Caco-2 (cell line): ENCODE measurements at regions of chrX and their contacts with region 1.

Region 1: GRCh38 chrX:8820910-8821527 is 19.8 kb upstream of the FAM9A start:
- DNase-seq: peak in 1 of 2 experiments; percentile 9
- H3K4me3 ChIP-seq: no peak overlapping the region
- H3K4me3 Mint-ChIP-seq: no peak overlapping the region
- H3K27ac Mint-ChIP-seq: no peak overlapping the region
- H3K4me1 ChIP-seq: no peaks in the 10 kb centered on the region
- H3K4me1 Mint-ChIP-seq: no peaks in the 10 kb centered on the region
- H3K27me3 ChIP-seq: no peaks in the 10 kb centered on the region
- H3K27me3 Mint-ChIP-seq: no peaks in the 10 kb centered on the region
- CTCF ChIP-seq: no peak

Region 2: DNA sequence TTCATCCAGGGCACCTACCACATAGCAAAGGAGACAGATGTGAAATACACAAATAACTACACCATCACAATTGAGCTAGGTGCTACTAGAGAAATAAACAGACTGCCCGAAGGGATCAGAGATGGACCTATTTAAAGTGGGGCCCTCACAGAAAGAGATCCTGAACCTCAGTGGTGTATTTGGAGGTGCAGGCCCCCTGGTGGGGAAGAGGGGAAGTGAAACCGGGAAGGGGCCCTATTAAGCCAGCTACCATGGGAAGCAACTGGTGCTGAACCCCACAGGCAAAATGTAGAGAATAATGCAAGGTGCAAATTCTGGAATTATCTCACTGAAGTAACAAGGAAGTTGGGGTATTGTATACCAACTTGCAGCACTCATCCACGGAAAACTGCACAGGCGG is 58.7 kb after region 1 on chrX:
- CTCF ChIA-PET with region 1: interaction called, 3 read pairs
- POLR2A ChIA-PET with region 1: no interaction called
- intact Hi-C with region 1: loop called (anchors 2 kb)
- DNase-seq: peak; percentile 27 to 31
- H3K4me3 ChIP-seq: no peak overlapping the region
- H3K4me3 Mint-ChIP-seq: no peak overlapping the region
- H3K27ac Mint-ChIP-seq: no peak overlapping the region
- H3K4me1 ChIP-seq: no peaks in the 10 kb centered on the region
- H3K4me1 Mint-ChIP-seq: no peaks in the 10 kb centered on the region
- H3K27me3 ChIP-seq: no peaks in the 10 kb centered on the region
- H3K27me3 Mint-ChIP-seq: no peaks in the 10 kb centered on the region
- CTCF ChIP-seq: peak; percentile 18 to 40

Region 3: GRCh38 chrX:9708904-9709553 is 888.0 kb after region 1 on chrX:
- CTCF ChIA-PET with region 1: no interaction called
- POLR2A ChIA-PET with region 1: no interaction called
- intact Hi-C with region 1: loop called (anchors 5 kb)
- DNase-seq: peak; percentile 38 to 65
- H3K4me3 ChIP-seq: no peak overlapping the region
- H3K4me3 Mint-ChIP-seq: no peak overlapping the region
- H3K27ac Mint-ChIP-seq: peak overlapping the region; percentile 76
- H3K4me1 ChIP-seq: 0 out of 2 replicates have a peak, but pooled peaks cover 4% of the 10 kb centered on the region
- H3K4me1 Mint-ChIP-seq: peaks cover 17% of the 10 kb centered on the region
- H3K27me3 ChIP-seq: no peaks in the 10 kb centered on the region
- H3K27me3 Mint-ChIP-seq: no peaks in the 10 kb centered on the region
- CTCF ChIP-seq: peak; percentile 76 to 78